A549 (cell line): ENCODE measurements at regions of chr1 and their contacts with region 1.

Region 1: DNA sequence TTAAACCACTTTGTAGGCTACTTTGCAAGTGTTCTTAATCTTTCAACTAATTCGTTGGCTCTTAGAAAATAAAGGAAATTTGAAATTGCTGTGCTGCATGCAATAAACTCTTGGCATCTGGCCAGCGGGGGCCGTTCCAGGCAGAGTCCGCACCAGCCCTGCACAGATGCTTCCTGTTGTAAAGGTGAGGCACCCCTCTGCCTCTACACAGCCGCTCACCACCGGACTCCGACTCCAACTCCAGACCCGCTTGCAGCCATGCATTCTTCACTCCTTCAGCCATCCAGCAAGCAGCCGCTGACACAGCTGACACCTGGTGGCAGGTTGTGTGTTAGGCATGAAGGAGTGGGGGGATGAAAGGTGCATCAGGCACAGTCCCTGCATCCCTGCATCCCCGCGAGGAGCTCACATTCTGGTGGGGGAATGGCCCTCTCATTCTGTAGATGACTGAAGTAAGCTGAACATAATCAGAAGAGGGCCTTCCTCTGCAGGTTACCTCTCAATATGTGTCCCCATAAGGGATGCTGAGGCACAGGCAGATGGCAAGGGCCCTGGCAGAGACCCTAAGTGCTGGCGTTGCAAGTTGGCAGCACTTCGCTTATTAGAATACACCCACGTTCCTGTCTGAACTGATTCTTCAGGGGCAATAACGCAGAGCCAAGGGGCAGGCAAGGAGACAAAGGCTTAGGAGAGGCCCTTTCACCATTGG is 56.8 kb downstream of the GLIS1 start:
- DNase-seq: peak; percentile 36 to 50
- ATAC-seq: peak; percentile 57 to 78; a peak in 3 of 6 replicates
- H3K4me3 ChIP-seq: no peak overlapping the region
- H3K27ac ChIP-seq: no peak overlapping the region
- H3K4me1 ChIP-seq: no peaks in the 10 kb centered on the region
- CTCF ChIP-seq: peak; percentile 34
- EP300 ChIP-seq: no peak
- POLR2A ChIP-seq: no peak
- RAD21 ChIP-seq: peak; percentile 46 to 52

Region 2: GRCh38 chr1:53693773-53694717 is 11.9 kb after region 1 on chr1:
- CTCF ChIA-PET with region 1: interaction called, 10 read pairs
- POLR2A ChIA-PET with region 1: no interaction called
- DNase-seq: no peak
- ATAC-seq: no peak
- H3K4me3 ChIP-seq: no peak overlapping the region
- H3K27ac ChIP-seq: no peak overlapping the region
- H3K4me1 ChIP-seq: no peaks in the 10 kb centered on the region
- CTCF ChIP-seq: no peak
- EP300 ChIP-seq: no peak
- POLR2A ChIP-seq: no peak
- RAD21 ChIP-seq: no peak